ENCODE measurements at regions of chr2 and their contacts with region 1.

Region 1: DNA sequence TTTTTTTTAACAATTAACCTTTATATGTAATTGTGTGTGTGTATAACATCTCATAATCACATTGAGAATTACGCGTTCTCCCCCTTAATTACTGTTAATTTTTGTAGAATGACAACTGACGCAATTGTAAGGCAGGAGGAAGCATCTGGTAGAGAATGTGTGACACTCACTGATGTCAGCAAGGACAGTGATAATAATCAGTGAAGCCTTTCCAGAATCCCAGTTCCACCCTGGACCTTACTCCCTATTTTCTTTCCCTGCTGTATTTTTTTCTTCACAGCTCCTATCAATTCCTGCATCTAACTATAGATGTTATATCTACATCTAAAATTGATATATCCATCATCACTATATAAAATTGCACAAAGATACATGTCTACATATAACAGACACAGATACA is 16.1 kb upstream of the STRN start:
- DNase-seq: no peak
- ATAC-seq: no peak
- H3K4me3 ChIP-seq: no peak overlapping the region
- H3K4me3 Mint-ChIP-seq: no peak overlapping the region
- H3K27ac ChIP-seq: no peak overlapping the region
- H3K27ac Mint-ChIP-seq: no peak overlapping the region
- H3K4me1 ChIP-seq: no peaks in the 10 kb centered on the region
- H3K4me1 Mint-ChIP-seq: no peaks in the 10 kb centered on the region
- H3K27me3 ChIP-seq: no peaks in the 10 kb centered on the region
- H3K27me3 Mint-ChIP-seq: no peaks in the 10 kb centered on the region
- CTCF ChIP-seq: no peak

Region 2: GRCh38 chr2:36871068-36871707 is 111.3 kb before region 1 on chr2:
- CTCF ChIA-PET with region 1: no interaction called
- POLR2A ChIA-PET with region 1: no interaction called
- intact Hi-C with region 1: loop called in 1 of 2 experiments (anchors 10 kb)
- DNase-seq: no peak
- ATAC-seq: no peak
- H3K4me3 ChIP-seq: no peak overlapping the region
- H3K4me3 Mint-ChIP-seq: no peak overlapping the region
- H3K27ac ChIP-seq: no peak overlapping the region
- H3K27ac Mint-ChIP-seq: no peak overlapping the region
- H3K4me1 ChIP-seq: no peaks in the 10 kb centered on the region
- H3K4me1 Mint-ChIP-seq: no peaks in the 10 kb centered on the region
- H3K27me3 ChIP-seq: no peaks in the 10 kb centered on the region
- H3K27me3 Mint-ChIP-seq: no peaks in the 10 kb centered on the region
- CTCF ChIP-seq: no peak

Measured in CD4-positive, alpha-beta T cell (primary cell).